ENCODE measurements at regions of chr10 and their contacts with region 1.

Region 1: GRCh38 chr10:95601116-95601719 is 40.0 kb upstream of the SORBS1 start:
- DNase-seq: peak in 3 of 4 donors; percentile 63 to 93 (median 84)
- ATAC-seq: peak; percentile 98
- H3K4me3 ChIP-seq: no peak overlapping the region
- H3K27ac ChIP-seq: no peak overlapping the region
- H3K4me1 ChIP-seq: no peaks in the 10 kb centered on the region
- H3K27me3 ChIP-seq: no peaks in the 10 kb centered on the region
- CTCF ChIP-seq: peak; percentile 78 to 93

Region 2: GRCh38 chr10:95374597-95375209 is 226.5 kb before region 1 on chr10:
- intact Hi-C with region 1: loop called in 1 of 2 experiments (anchors 5 kb)
- DNase-seq: peak; percentile 44 to 82 (median 78)
- ATAC-seq: peak; percentile 99
- H3K4me3 ChIP-seq: no peak overlapping the region
- H3K27ac ChIP-seq: no peak overlapping the region
- H3K4me1 ChIP-seq: no peaks in the 10 kb centered on the region
- H3K27me3 ChIP-seq: no peaks in the 10 kb centered on the region
- CTCF ChIP-seq: peak; percentile 83 to 86

Region 3: DNA sequence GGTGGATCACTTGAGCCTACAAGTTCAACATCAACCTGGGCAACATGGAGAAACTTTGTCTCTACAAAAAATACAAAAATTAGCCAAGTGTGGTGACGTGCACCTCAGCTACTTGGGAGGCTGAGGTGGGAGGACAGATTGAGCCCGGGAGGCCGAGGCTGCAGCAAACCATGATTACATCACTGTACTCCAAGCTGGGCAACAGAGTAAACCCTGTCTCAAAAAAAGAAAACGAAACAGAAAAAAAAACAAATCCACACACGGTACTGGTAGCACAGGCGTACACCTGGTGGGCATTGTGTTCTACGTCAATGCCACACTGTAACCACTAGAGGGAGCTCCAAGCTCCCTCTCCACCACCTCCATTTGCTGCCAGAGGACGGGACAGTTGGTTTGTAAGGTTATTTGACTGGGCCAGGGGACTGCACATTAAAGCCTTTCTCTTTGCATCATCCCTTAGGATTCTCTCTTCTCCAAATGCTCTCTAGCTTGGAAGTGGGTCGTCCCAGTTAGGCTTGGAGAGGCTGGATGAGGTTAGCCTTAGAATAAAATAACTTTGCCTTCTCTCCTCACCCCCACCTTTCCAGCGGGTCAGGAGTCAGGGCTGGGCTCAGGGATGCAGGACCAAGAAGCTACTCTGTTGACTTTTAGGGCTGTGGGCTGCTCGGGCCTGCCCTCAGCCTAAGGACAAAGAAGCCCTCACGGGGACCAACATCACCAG is 170.8 kb before region 1 on chr10:
- intact Hi-C with region 1: loop called in 1 of 2 experiments (anchors 2 kb)
- DNase-seq: peak in 2 of 4 donors; percentile 64 to 83
- ATAC-seq: peak; percentile 91
- H3K4me3 ChIP-seq: no peak overlapping the region
- H3K27ac ChIP-seq: no peak overlapping the region
- H3K4me1 ChIP-seq: peaks cover 0 to 10% of the 10 kb centered on the region in 2 donors
- H3K27me3 ChIP-seq: no peaks in the 10 kb centered on the region
- CTCF ChIP-seq: peak; percentile 91 to 93

Region 4: DNA sequence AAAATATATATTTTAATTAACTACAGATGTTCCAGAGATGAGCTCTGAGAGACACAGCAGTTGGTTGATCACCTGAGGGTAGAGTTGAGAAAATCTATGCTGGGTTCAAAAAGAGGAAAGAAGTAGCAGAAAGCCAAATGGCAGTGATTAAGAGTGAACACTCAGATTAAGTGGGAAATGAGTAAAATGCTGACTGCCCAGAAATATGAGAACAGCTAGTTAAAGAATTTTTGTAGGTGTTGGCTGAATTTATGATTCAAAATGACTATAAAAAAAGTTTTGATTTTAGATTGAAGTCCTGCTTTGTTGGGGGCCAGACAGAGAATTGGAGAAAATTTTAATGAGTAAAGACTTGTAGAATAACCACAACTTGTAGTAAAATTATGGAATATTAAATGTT is 82.7 kb after region 1 on chr10:
- intact Hi-C with region 1: no loop called
- DNase-seq: no peak
- ATAC-seq: no peak
- H3K4me3 ChIP-seq: no peak overlapping the region
- H3K27ac ChIP-seq: no peak overlapping the region
- H3K4me1 ChIP-seq: no peaks in the 10 kb centered on the region
- H3K27me3 ChIP-seq: no peaks in the 10 kb centered on the region
- CTCF ChIP-seq: no peak